Common myeloid progenitor, CD34-positive (primary cell): ENCODE measurements at regions of chr15 and their contacts with region 1.

Region 1: DNA sequence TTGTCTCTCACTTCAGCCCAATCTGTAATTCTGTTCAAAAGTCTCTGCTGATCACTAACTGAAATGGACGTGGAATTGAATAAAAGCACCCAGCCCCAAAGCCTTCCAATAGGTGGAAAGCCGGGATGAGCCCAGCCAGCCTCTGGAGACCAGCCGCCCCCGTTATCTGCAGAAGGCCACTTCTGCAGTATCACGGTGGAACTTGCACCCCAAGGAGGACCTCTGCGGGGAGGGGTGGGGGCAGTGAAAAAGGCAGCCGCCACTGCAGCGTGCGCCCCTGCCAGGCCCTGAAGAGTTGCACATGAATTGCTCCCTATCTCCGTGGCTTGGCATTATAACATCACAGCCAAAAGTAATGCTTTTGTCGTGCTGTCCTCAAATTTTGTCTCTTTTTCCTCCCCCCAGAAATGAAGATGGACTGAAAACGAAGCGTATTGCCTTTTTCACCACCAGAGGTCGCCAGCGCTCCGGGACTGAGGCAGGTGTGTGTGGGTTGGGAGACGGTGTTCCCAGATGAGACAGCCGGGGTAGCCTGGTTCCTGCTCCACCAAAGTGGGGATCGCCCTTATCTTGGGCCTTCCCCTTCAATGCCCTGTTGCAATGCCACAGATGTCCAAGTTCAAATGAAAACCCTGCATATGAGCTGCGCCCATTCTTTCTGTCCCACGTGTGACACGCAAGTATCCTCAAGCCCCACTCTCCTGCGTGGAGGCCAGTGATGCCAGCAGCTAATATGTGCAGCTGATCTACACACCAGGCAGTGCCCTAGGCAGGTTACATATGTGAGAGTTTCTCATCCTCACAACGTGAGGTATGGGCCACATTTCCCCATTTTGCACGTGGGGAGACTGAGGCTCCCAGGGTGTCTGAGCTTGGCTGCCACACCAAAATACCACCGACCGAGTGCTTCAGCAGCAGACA is 96.0 kb downstream of the LRRK1 start:
- DNase-seq: peak; percentile 50 to 63 (median 51)
- H3K4me3 ChIP-seq: no peak overlapping the region
- H3K27ac ChIP-seq: no peak overlapping the region
- H3K4me1 ChIP-seq: peaks cover 0 to 11% (median 5%) of the 10 kb centered on the region in 4 experiments
- H3K27me3 ChIP-seq: no peaks in the 10 kb centered on the region

Region 2: GRCh38 chr15:101031213-101031612 is 16.0 kb after region 1 on chr15:
- CTCF ChIA-PET with region 1: interaction called, 17 read pairs
- POLR2A ChIA-PET with region 1: interaction called, 3 read pairs
- DNase-seq: no peak
- H3K4me3 ChIP-seq: no peak overlapping the region
- H3K27ac ChIP-seq: no peak overlapping the region
- H3K4me1 ChIP-seq: peaks cover 0 to 6% (median 1%) of the 10 kb centered on the region in 4 experiments
- H3K27me3 ChIP-seq: no peaks in the 10 kb centered on the region

Region 3: GRCh38 chr15:101170568-101171350 is 155.6 kb after region 1 on chr15:
- CTCF ChIA-PET with region 1: no interaction called
- POLR2A ChIA-PET with region 1: no interaction called
- DNase-seq: no peak
- H3K4me3 ChIP-seq: no peak overlapping the region
- H3K27ac ChIP-seq: no peak overlapping the region
- H3K4me1 ChIP-seq: peaks cover 20 to 81% (median 68%) of the 10 kb centered on the region in 4 experiments
- H3K27me3 ChIP-seq: no peaks in the 10 kb centered on the region

Region 4: GRCh38 chr15:101251830-101252820 is 236.9 kb after region 1 on chr15 and contains the start of gene CHSY1:
- CTCF ChIA-PET with region 1: interaction called, 133 read pairs
- POLR2A ChIA-PET with region 1: no interaction called
- DNase-seq: peak; percentile 92 to 96 (median 95)
- H3K4me3 ChIP-seq: peak within 1 kb of the TSS; percentile 75 to 92 (median 86)
- H3K27ac ChIP-seq: peak within 1 kb of the TSS in 1 of 2 experiments; percentile 75
- H3K4me1 ChIP-seq: peaks cover 31 to 75% (median 68%) of the 10 kb centered on the region in 4 experiments
- H3K27me3 ChIP-seq: no peaks in the 10 kb centered on the region

Region 5: GRCh38 chr15:101267320-101268104 is 252.3 kb after region 1 on chr15:
- CTCF ChIA-PET with region 1: interaction called, 42 read pairs
- POLR2A ChIA-PET with region 1: no interaction called
- DNase-seq: no peak
- H3K4me3 ChIP-seq: no peak overlapping the region
- H3K27ac ChIP-seq: no peak overlapping the region
- H3K4me1 ChIP-seq: peaks cover 0 to 4% (median 0%) of the 10 kb centered on the region in 4 experiments
- H3K27me3 ChIP-seq: no peaks in the 10 kb centered on the region